ENCODE measurements at regions of chr1 and their contacts with region 1.

Region 1: GRCh38 chr1:36385410-36386257 is at the start of gene STK40:
- DNase-seq: peak; percentile 95 to 99 (median 98)
- H3K4me3 ChIP-seq: peak within 1 kb of the TSS; percentile 88 to 94
- H3K4me3 Mint-ChIP-seq: peak within 1 kb of the TSS; percentile 91 to 96 (median 94)
- H3K27ac ChIP-seq: peak within 1 kb of the TSS; percentile 87
- H3K27ac Mint-ChIP-seq: peak within 1 kb of the TSS; percentile 97 to 100 (median 99)
- H3K4me1 ChIP-seq: peaks cover 57% of the 10 kb centered on the region
- H3K4me1 Mint-ChIP-seq: peaks cover 35 to 62% (median 47%) of the 10 kb centered on the region in 4 donors
- H3K27me3 ChIP-seq: no peaks in the 10 kb centered on the region
- H3K27me3 Mint-ChIP-seq: no peaks in the 10 kb centered on the region
- total RNA-seq, gene STK40: 52.2 to 57.4 TPM

Region 2: GRCh38 chr1:35930593-35931445 is 454.8 kb before region 1 on chr1 and contains the start of gene AGO3:
- CTCF ChIA-PET with region 1: no interaction called
- POLR2A ChIA-PET with region 1: no interaction called
- intact Hi-C with region 1: loop called (anchors 5 kb)
- DNase-seq: peak; percentile 87 to 92 (median 89)
- H3K4me3 ChIP-seq: peak within 1 kb of the TSS; percentile 71 to 72
- H3K4me3 Mint-ChIP-seq: peak within 1 kb of the TSS; percentile 92 to 97 (median 94)
- H3K27ac ChIP-seq: peak within 1 kb of the TSS; percentile 92
- H3K27ac Mint-ChIP-seq: peak within 1 kb of the TSS; percentile 97 to 99 (median 98)
- H3K4me1 ChIP-seq: peaks cover 26% of the 10 kb centered on the region
- H3K4me1 Mint-ChIP-seq: peaks cover 22 to 37% (median 28%) of the 10 kb centered on the region in 4 donors
- H3K27me3 ChIP-seq: no peaks in the 10 kb centered on the region
- H3K27me3 Mint-ChIP-seq: no peaks in the 10 kb centered on the region
- total RNA-seq, gene AGO3: 45.6 to 47.3 TPM

Region 3: DNA sequence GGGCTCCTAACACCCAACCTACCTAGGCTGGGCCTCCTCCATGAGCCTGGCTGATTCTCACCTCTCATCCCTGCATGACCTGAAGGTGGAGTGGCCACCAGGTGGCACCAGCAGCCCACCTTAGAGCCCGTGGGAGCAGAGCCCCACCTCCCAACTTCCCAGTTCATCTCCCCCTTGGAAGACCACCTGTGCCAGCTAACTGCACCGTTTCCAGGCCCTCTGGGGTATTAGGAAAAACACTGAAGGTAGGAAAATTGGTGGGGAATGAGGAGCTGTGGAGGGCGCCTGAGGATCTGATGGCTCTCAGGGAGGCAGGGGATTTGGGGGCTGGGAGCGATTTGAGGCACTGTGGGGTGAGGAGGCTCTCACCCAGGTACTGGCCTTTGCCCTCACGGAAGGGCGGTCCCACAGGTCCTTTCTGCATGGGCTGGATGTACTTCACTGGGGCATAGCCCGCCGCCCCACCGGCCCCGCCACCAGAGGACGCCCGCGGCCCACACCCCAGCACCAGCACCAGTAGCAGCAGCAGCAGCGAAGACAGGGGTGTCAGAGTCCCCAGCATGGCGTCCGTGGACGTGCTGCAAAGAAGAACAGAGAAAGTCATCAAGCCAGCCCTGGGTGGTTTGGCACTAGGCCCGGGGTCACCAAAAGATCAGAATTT is 285.8 kb before region 1 on chr1:
- CTCF ChIA-PET with region 1: no interaction called
- POLR2A ChIA-PET with region 1: no interaction called
- intact Hi-C with region 1: no loop called
- DNase-seq: peak; percentile 62 to 71 (median 70)
- H3K4me3 ChIP-seq: no peak overlapping the region
- H3K4me3 Mint-ChIP-seq: peak overlapping the region in 2 of 8 donors; percentile 26 to 39
- H3K27ac ChIP-seq: no peak overlapping the region
- H3K27ac Mint-ChIP-seq: peak overlapping the region in 1 of 7 donors; percentile 50
- H3K4me1 ChIP-seq: no peaks in the 10 kb centered on the region
- H3K4me1 Mint-ChIP-seq: peaks cover 0 to 4% (median under 1%) of the 10 kb centered on the region in 4 donors
- H3K27me3 ChIP-seq: no peaks in the 10 kb centered on the region
- H3K27me3 Mint-ChIP-seq: no peaks in the 10 kb centered on the region

Region 4: GRCh38 chr1:36178471-36179219 is 207.0 kb before region 1 on chr1:
- CTCF ChIA-PET with region 1: no interaction called
- POLR2A ChIA-PET with region 1: no interaction called
- intact Hi-C with region 1: no loop called
- DNase-seq: peak in 1 of 5 donors; percentile 7
- H3K4me3 ChIP-seq: no peak overlapping the region
- H3K4me3 Mint-ChIP-seq: peak overlapping the region in 1 of 8 donors; percentile 17
- H3K27ac ChIP-seq: no peak overlapping the region
- H3K27ac Mint-ChIP-seq: peak overlapping the region in 1 of 7 donors; percentile 64
- H3K4me1 ChIP-seq: no peaks in the 10 kb centered on the region
- H3K4me1 Mint-ChIP-seq: peaks cover 0 to 8% (median 6%) of the 10 kb centered on the region in 4 donors
- H3K27me3 ChIP-seq: no peaks in the 10 kb centered on the region
- H3K27me3 Mint-ChIP-seq: no peaks in the 10 kb centered on the region

Region 5: DNA sequence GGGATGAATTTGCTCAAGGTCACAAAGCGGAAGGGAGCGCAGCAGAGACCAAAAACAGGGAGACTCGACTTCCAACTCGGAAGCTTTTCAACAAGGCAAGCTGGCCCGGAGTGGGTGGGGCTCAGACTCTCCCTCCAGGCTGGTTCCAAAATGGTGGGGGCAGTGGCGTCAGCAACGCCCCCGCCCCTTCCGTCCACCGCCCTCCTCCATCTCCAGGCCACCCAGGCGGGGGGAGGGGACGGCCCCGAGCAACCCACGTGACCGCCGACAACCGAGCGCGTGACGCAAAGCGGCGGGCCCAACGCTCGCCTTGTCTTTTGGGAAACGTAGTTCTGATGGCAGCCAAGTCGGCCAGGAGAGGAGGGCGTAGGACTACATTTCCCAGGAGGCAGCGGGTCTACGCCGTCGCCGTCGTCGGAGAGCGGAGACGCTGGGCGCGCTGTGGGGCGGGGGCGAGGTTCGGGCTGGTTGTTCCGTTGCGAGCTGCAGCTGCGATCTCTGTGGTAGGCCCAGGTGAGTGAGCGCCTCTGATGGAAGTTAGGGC is 161.6 kb before region 1 on chr1 and contains the start of gene THRAP3:
- CTCF ChIA-PET with region 1: no interaction called
- POLR2A ChIA-PET with region 1: interaction called, 7 read pairs
- intact Hi-C with region 1: loop called (anchors 1 kb)
- DNase-seq: peak; percentile 100
- H3K4me3 ChIP-seq: peak within 1 kb of the TSS; percentile 77 to 97
- H3K4me3 Mint-ChIP-seq: peak within 1 kb of the TSS; percentile 95 to 99 (median 98)
- H3K27ac ChIP-seq: peak within 1 kb of the TSS; percentile 98
- H3K27ac Mint-ChIP-seq: peak within 1 kb of the TSS; percentile 97 to 100 (median 100)
- H3K4me1 ChIP-seq: peaks cover 45% of the 10 kb centered on the region
- H3K4me1 Mint-ChIP-seq: peaks cover 19 to 46% (median 29%) of the 10 kb centered on the region in 4 donors
- H3K27me3 ChIP-seq: no peaks in the 10 kb centered on the region
- H3K27me3 Mint-ChIP-seq: no peaks in the 10 kb centered on the region
- total RNA-seq, gene THRAP3: 127 to 130 TPM

Region 6: DNA sequence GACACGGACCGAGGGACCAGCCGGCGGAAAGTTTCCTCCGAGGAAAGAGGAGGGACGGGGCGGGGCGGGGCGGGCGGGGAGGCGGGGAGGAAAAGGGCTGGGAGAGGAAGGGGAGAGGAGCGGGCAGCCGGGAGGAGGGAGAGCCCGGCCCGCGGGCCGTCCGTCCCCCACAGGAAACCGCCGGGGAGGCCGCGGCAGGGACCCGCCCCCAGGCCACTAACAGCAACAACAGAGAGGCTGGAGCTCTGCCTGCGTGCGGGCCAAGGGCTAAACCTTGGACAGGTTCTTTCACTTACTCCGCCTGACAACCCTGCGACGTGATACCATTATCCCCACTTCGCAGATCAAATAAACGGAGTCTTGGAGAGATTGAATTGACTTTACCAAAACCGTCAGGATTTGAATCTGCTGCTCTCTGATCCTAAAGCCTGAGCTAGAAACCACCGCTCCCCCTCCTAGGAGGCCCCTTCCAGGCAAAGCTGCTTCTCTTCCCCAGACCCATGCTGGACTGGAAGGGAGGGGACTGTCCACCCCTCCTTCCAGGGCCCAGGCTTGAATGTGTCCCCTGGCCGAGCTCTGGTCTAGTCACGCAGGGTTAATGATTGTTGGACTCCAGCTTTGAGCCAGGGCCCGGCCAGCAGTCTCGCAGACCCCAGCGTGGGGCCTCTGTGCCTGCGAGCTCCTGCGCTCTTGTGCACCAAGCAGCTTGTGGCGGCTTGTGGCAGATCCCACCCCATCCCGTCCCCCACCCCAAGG is 61.9 kb before region 1 on chr1 and contains the start of gene EVA1B:
- CTCF ChIA-PET with region 1: interaction called, 3 read pairs
- POLR2A ChIA-PET with region 1: interaction called, 14 read pairs
- intact Hi-C with region 1: no loop called
- DNase-seq: peak; percentile 26 to 54 (median 31)
- H3K4me3 ChIP-seq: peak within 1 kb of the TSS; percentile 47 to 73
- H3K4me3 Mint-ChIP-seq: peak within 1 kb of the TSS; percentile 80 to 84 (median 83)
- H3K27ac ChIP-seq: peak within 1 kb of the TSS; percentile 35
- H3K27ac Mint-ChIP-seq: peak within 1 kb of the TSS in 6 of 7 donors; percentile 63 to 84 (median 76)
- H3K4me1 ChIP-seq: peaks cover 28% of the 10 kb centered on the region
- H3K4me1 Mint-ChIP-seq: peaks cover 18 to 28% (median 24%) of the 10 kb centered on the region in 4 donors
- H3K27me3 ChIP-seq: no peaks in the 10 kb centered on the region
- H3K27me3 Mint-ChIP-seq: no peaks in the 10 kb centered on the region
- total RNA-seq, gene EVA1B: 6.3 to 7.3 TPM

Region 7: GRCh38 chr1:36350659-36351226 is 34.9 kb before region 1 on chr1:
- CTCF ChIA-PET with region 1: interaction called, 3 read pairs
- POLR2A ChIA-PET with region 1: interaction called, 13 read pairs
- intact Hi-C with region 1: loop called (anchors 1 kb)
- DNase-seq: peak; percentile 42 to 82 (median 53)
- H3K4me3 ChIP-seq: no peak overlapping the region
- H3K4me3 Mint-ChIP-seq: peak overlapping the region in 7 of 8 donors; percentile 10 to 66 (median 58)
- H3K27ac ChIP-seq: peak overlapping the region; percentile 19
- H3K27ac Mint-ChIP-seq: peak overlapping the region; percentile 66 to 91 (median 83)
- H3K4me1 ChIP-seq: peaks cover 24% of the 10 kb centered on the region
- H3K4me1 Mint-ChIP-seq: peaks cover 10 to 37% (median 22%) of the 10 kb centered on the region in 4 donors
- H3K27me3 ChIP-seq: no peaks in the 10 kb centered on the region
- H3K27me3 Mint-ChIP-seq: no peaks in the 10 kb centered on the region

Region 8: GRCh38 chr1:36397378-36398230 is 12.0 kb after region 1 on chr1 and contains the start of gene LSM10:
- CTCF ChIA-PET with region 1: interaction called, 23 read pairs
- POLR2A ChIA-PET with region 1: interaction called, 107 read pairs
- intact Hi-C with region 1: loop called (anchors 1 kb)
- DNase-seq: peak; percentile 85 to 94 (median 86)
- H3K4me3 ChIP-seq: peak within 1 kb of the TSS; percentile 90 to 97
- H3K4me3 Mint-ChIP-seq: peak within 1 kb of the TSS; percentile 95 to 99 (median 98)
- H3K27ac ChIP-seq: peak within 1 kb of the TSS; percentile 90
- H3K27ac Mint-ChIP-seq: peak within 1 kb of the TSS; percentile 89 to 100 (median 98)
- H3K4me1 ChIP-seq: peaks cover 20% of the 10 kb centered on the region
- H3K4me1 Mint-ChIP-seq: peaks cover 13 to 41% (median 26%) of the 10 kb centered on the region in 4 donors
- H3K27me3 ChIP-seq: no peaks in the 10 kb centered on the region
- H3K27me3 Mint-ChIP-seq: no peaks in the 10 kb centered on the region
- total RNA-seq, gene LSM10: 51.0 to 53.0 TPM

Region 9: GRCh38 chr1:36457691-36458090 is 72.1 kb after region 1 on chr1:
- CTCF ChIA-PET with region 1: no interaction called
- POLR2A ChIA-PET with region 1: no interaction called
- intact Hi-C with region 1: no loop called
- DNase-seq: peak in 4 of 5 donors; percentile 22 to 42 (median 24)
- H3K4me3 ChIP-seq: peak overlapping the region in 1 of 2 donors; percentile 25
- H3K4me3 Mint-ChIP-seq: peak overlapping the region in 7 of 8 donors; percentile 68 to 88 (median 76)
- H3K27ac ChIP-seq: peak overlapping the region; percentile 12
- H3K27ac Mint-ChIP-seq: peak overlapping the region in 6 of 7 donors; percentile 78 to 88 (median 81)
- H3K4me1 ChIP-seq: peaks cover 34% of the 10 kb centered on the region
- H3K4me1 Mint-ChIP-seq: peaks cover 16 to 52% (median 32%) of the 10 kb centered on the region in 4 donors
- H3K27me3 ChIP-seq: no peaks in the 10 kb centered on the region
- H3K27me3 Mint-ChIP-seq: no peaks in the 10 kb centered on the region

Measured in CD4-positive, alpha-beta memory T cell (primary cell).